CD4-positive, alpha-beta T cell (primary cell): ENCODE measurements at regions of chr4 and their contacts with region 1.

Region 1: GRCh38 chr4:38179690-38180377 is 219.6 kb downstream of the PTTG2 start:
- DNase-seq: peak; percentile 55 to 85 (median 72)
- ATAC-seq: peak; percentile 62
- H3K4me3 ChIP-seq: no peak overlapping the region
- H3K4me3 Mint-ChIP-seq: no peak overlapping the region
- H3K27ac ChIP-seq: no peak overlapping the region
- H3K27ac Mint-ChIP-seq: no peak overlapping the region
- H3K4me1 ChIP-seq: peaks cover 38% of the 10 kb centered on the region
- H3K4me1 Mint-ChIP-seq: peaks cover 44% of the 10 kb centered on the region
- H3K27me3 ChIP-seq: no peaks in the 10 kb centered on the region
- H3K27me3 Mint-ChIP-seq: no peaks in the 10 kb centered on the region
- CTCF ChIP-seq: peak; percentile 99

Region 2: GRCh38 chr4:38062088-38062893 is 117.5 kb before region 1 on chr4:
- CTCF ChIA-PET with region 1: interaction called, 5 read pairs
- POLR2A ChIA-PET with region 1: no interaction called
- intact Hi-C with region 1: loop called (anchors 1 to 2 kb)
- DNase-seq: peak; percentile 32 to 82 (median 54)
- ATAC-seq: peak; percentile 73
- H3K4me3 ChIP-seq: peak overlapping the region; percentile 44
- H3K4me3 Mint-ChIP-seq: peak overlapping the region; percentile 91
- H3K27ac ChIP-seq: no peak overlapping the region
- H3K27ac Mint-ChIP-seq: no peak overlapping the region
- H3K4me1 ChIP-seq: peaks cover 7% of the 10 kb centered on the region
- H3K4me1 Mint-ChIP-seq: peaks cover 15% of the 10 kb centered on the region
- H3K27me3 ChIP-seq: no peaks in the 10 kb centered on the region
- H3K27me3 Mint-ChIP-seq: no peaks in the 10 kb centered on the region
- CTCF ChIP-seq: peak; percentile 95

Region 3: GRCh38 chr4:38160487-38161207 is 19.2 kb before region 1 on chr4:
- CTCF ChIA-PET with region 1: interaction called, 8 read pairs
- POLR2A ChIA-PET with region 1: interaction called, 7 read pairs
- intact Hi-C with region 1: loop called in 1 of 2 experiments (anchors 2 kb)
- DNase-seq: peak in 12 of 14 experiments; percentile 10 to 88 (median 32)
- ATAC-seq: peak; percentile 87
- H3K4me3 ChIP-seq: no peak overlapping the region
- H3K4me3 Mint-ChIP-seq: no peak overlapping the region
- H3K27ac ChIP-seq: peak overlapping the region in 1 of 2 donors; percentile 53
- H3K27ac Mint-ChIP-seq: peak overlapping the region; percentile 67
- H3K4me1 ChIP-seq: peaks cover 28% of the 10 kb centered on the region
- H3K4me1 Mint-ChIP-seq: peaks cover 52% of the 10 kb centered on the region
- H3K27me3 ChIP-seq: no peaks in the 10 kb centered on the region
- H3K27me3 Mint-ChIP-seq: no peaks in the 10 kb centered on the region
- CTCF ChIP-seq: no peak

Region 4: DNA sequence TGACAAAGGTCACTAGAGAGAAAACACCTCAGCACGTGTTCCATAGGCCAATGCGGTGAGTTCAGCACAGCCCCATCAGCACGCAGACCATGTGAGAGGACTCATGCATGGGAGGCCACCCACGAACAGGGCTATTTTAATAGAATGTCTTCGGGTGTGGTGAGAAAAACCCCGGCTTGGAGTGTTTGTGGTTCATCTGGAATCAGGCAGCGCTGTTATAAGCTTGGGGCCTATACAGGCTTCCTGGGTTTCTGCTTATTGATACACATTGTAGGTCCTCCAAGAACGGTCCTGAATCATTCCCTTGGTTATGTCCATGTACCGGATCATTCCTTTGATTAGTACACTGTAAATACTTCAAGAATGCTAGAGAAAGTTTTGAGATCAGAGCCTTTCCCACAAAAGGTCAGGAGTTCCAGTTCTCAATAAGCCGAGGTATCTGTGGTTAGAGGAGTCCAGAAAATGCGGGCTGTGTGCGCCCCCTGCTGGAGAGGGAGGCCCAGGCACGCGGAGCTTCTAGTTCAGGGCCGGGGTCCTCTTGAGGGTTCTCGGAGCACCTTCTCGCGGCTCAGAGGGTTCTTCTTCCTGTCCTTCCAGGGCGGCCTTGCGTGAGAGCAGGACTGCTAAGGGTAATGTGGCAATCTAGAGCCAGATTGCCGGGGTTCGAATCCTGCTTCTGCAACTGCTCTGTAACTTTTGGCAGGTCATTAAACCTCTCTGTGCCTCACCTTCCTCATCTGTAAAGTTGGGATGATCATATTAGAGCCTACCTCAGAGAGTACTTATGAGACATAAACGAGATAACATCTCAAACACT is 551.2 kb after region 1 on chr4:
- CTCF ChIA-PET with region 1: interaction called, 111 read pairs
- POLR2A ChIA-PET with region 1: interaction called, 3 read pairs
- intact Hi-C with region 1: loop called (anchors 1 kb)
- DNase-seq: peak; percentile 67 to 92 (median 80)
- ATAC-seq: peak; percentile 79
- H3K4me3 ChIP-seq: no peak overlapping the region
- H3K4me3 Mint-ChIP-seq: no peak overlapping the region
- H3K27ac ChIP-seq: no peak overlapping the region
- H3K27ac Mint-ChIP-seq: no peak overlapping the region
- H3K4me1 ChIP-seq: peaks cover 18% of the 10 kb centered on the region
- H3K4me1 Mint-ChIP-seq: peaks cover 20% of the 10 kb centered on the region
- H3K27me3 ChIP-seq: no peaks in the 10 kb centered on the region
- H3K27me3 Mint-ChIP-seq: no peaks in the 10 kb centered on the region
- CTCF ChIP-seq: peak; percentile 99

Region 5: GRCh38 chr4:38856524-38857337 is 676.9 kb after region 1 on chr4 and contains the start of gene TLR6:
- CTCF ChIA-PET with region 1: no interaction called
- POLR2A ChIA-PET with region 1: no interaction called
- intact Hi-C with region 1: loop called in 1 of 2 experiments (anchors 5 kb)
- DNase-seq: peak in 13 of 14 experiments; percentile 31 to 87 (median 60)
- ATAC-seq: peak; percentile 80
- H3K4me3 ChIP-seq: peak within 1 kb of the TSS; percentile 50
- H3K4me3 Mint-ChIP-seq: peak within 1 kb of the TSS; percentile 69
- H3K27ac ChIP-seq: peak within 1 kb of the TSS; percentile 40 to 44
- H3K27ac Mint-ChIP-seq: peak within 1 kb of the TSS; percentile 78
- H3K4me1 ChIP-seq: peaks cover 18% of the 10 kb centered on the region
- H3K4me1 Mint-ChIP-seq: peaks cover 38% of the 10 kb centered on the region
- H3K27me3 ChIP-seq: no peaks in the 10 kb centered on the region
- H3K27me3 Mint-ChIP-seq: no peaks in the 10 kb centered on the region
- CTCF ChIP-seq: peak; percentile 92
- total RNA-seq, gene TLR6: 0.69 to 1.3 TPM